ENCODE measurements at regions of chr2 and their contacts with region 1.

Region 1: GRCh38 chr2:31170071-31170698 is 31.9 kb upstream of the GALNT14 start:
- DNase-seq: peak; percentile 42
- ATAC-seq: peak; percentile 97
- H3K4me3 Mint-ChIP-seq: no peak overlapping the region
- H3K27ac Mint-ChIP-seq: no peak overlapping the region
- H3K4me1 Mint-ChIP-seq: peaks cover 25% of the 10 kb centered on the region
- H3K27me3 Mint-ChIP-seq: no peaks in the 10 kb centered on the region
- CTCF ChIP-seq: peak; percentile 30

Region 2: GRCh38 chr2:29502460-29502911 is 1667.7 kb before region 1 on chr2:
- CTCF ChIA-PET with region 1: no interaction called
- POLR2A ChIA-PET with region 1: no interaction called
- intact Hi-C with region 1: no loop called
- DNase-seq: no peak
- ATAC-seq: no peak
- H3K4me3 Mint-ChIP-seq: no peak overlapping the region
- H3K27ac Mint-ChIP-seq: no peak overlapping the region
- H3K4me1 Mint-ChIP-seq: no peaks in the 10 kb centered on the region
- H3K27me3 Mint-ChIP-seq: peaks cover 5% of the 10 kb centered on the region
- CTCF ChIP-seq: no peak

Region 3: DNA sequence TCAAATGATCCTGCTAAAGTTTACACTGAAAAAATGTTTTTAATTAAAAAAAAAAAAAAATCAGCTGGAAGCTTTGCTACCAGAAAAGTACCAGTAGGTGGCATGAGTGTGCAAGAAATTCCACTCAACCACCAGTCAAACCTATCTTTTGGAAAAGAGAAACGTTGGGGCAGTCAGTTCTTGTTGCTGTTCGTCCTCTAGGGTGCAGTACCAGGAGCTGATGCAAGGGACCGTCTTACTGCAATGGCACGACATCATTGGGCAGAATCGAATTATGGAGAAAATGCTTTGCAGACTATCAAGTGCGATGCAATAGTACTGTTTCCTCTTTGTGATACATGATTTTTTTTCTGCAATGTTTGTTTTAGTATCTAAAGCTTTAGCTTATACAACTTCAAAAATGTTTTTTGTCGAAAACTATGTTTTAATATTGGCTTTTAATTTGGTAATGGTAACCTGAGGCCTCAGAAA is 1005.1 kb before region 1 on chr2:
- CTCF ChIA-PET with region 1: interaction called, 3 read pairs
- POLR2A ChIA-PET with region 1: no interaction called
- intact Hi-C with region 1: loop called (anchors 1 kb)
- DNase-seq: no peak
- ATAC-seq: peak; percentile 100
- H3K4me3 Mint-ChIP-seq: no peak overlapping the region
- H3K27ac Mint-ChIP-seq: no peak overlapping the region
- H3K4me1 Mint-ChIP-seq: peaks cover 21% of the 10 kb centered on the region
- H3K27me3 Mint-ChIP-seq: no peaks in the 10 kb centered on the region
- CTCF ChIP-seq: peak; percentile 45

Region 4: GRCh38 chr2:31089645-31090044 is 80.5 kb before region 1 on chr2:
- CTCF ChIA-PET with region 1: interaction called, 3 read pairs
- POLR2A ChIA-PET with region 1: no interaction called
- intact Hi-C with region 1: loop called (anchors 1 kb)
- DNase-seq: no peak
- ATAC-seq: no peak
- H3K4me3 Mint-ChIP-seq: no peak overlapping the region
- H3K27ac Mint-ChIP-seq: no peak overlapping the region
- H3K4me1 Mint-ChIP-seq: no peaks in the 10 kb centered on the region
- H3K27me3 Mint-ChIP-seq: no peaks in the 10 kb centered on the region
- CTCF ChIP-seq: no peak

Region 5: GRCh38 chr2:31151501-31151900 is 18.7 kb before region 1 on chr2:
- CTCF ChIA-PET with region 1: interaction called, 10 read pairs
- POLR2A ChIA-PET with region 1: no interaction called
- intact Hi-C with region 1: no loop called
- DNase-seq: no peak
- ATAC-seq: no peak
- H3K4me3 Mint-ChIP-seq: no peak overlapping the region
- H3K27ac Mint-ChIP-seq: no peak overlapping the region
- H3K4me1 Mint-ChIP-seq: peaks cover 8% of the 10 kb centered on the region
- H3K27me3 Mint-ChIP-seq: no peaks in the 10 kb centered on the region
- CTCF ChIP-seq: no peak

Region 6: GRCh38 chr2:31219131-31219969 is 49.2 kb after region 1 on chr2:
- CTCF ChIA-PET with region 1: interaction called, 15 read pairs
- POLR2A ChIA-PET with region 1: interaction called, 3 read pairs
- intact Hi-C with region 1: loop called (anchors 1 kb)
- DNase-seq: peak; percentile 41
- ATAC-seq: peak; percentile 81
- H3K4me3 Mint-ChIP-seq: peak overlapping the region; percentile 79
- H3K27ac Mint-ChIP-seq: peak overlapping the region; percentile 99
- H3K4me1 Mint-ChIP-seq: peaks cover 97% of the 10 kb centered on the region
- H3K27me3 Mint-ChIP-seq: no peaks in the 10 kb centered on the region
- CTCF ChIP-seq: no peak

Region 7: DNA sequence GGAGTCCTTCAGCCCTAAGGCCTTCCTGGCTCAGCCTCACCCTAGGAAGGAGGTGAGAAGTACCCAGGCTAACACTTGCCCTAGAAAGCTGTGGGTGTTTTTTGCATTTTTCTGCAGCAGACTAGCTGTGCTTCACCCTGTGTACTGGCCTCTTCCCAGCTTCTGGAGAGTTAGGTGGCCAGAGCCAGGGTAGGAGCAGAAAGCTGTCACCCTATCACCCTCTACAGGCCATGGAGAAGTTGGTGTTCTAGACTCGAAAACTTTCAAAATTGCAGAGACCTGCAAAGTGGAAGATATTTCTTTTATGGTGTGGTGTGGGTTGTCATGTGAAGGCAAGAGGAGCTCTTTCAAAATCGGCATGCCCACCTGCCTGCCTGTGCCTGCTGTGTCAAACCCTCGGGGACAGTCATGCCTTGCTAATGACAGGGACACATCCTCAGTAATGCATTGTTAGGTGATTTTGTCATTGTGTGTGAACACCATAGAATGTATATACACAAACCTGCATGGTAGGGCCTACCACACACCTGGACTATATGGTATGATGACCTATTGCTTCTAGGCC is 93.5 kb after region 1 on chr2:
- CTCF ChIA-PET with region 1: interaction called, 49 read pairs
- POLR2A ChIA-PET with region 1: no interaction called
- intact Hi-C with region 1: no loop called
- DNase-seq: no peak
- ATAC-seq: no peak
- H3K4me3 Mint-ChIP-seq: no peak overlapping the region
- H3K27ac Mint-ChIP-seq: peak overlapping the region; percentile 9
- H3K4me1 Mint-ChIP-seq: peaks cover 16% of the 10 kb centered on the region
- H3K27me3 Mint-ChIP-seq: no peaks in the 10 kb centered on the region
- CTCF ChIP-seq: no peak

Region 8: GRCh38 chr2:31333527-31334183 is 163.5 kb after region 1 on chr2:
- CTCF ChIA-PET with region 1: interaction called, 71 read pairs
- POLR2A ChIA-PET with region 1: interaction called, 4 read pairs
- intact Hi-C with region 1: loop called (anchors 1 kb)
- DNase-seq: peak; percentile 70
- ATAC-seq: peak; percentile 94
- H3K4me3 Mint-ChIP-seq: no peak overlapping the region
- H3K27ac Mint-ChIP-seq: peak overlapping the region; percentile 50
- H3K4me1 Mint-ChIP-seq: peaks cover 10% of the 10 kb centered on the region
- H3K27me3 Mint-ChIP-seq: peaks cover 3% of the 10 kb centered on the region
- CTCF ChIP-seq: peak; percentile 87

Region 9: DNA sequence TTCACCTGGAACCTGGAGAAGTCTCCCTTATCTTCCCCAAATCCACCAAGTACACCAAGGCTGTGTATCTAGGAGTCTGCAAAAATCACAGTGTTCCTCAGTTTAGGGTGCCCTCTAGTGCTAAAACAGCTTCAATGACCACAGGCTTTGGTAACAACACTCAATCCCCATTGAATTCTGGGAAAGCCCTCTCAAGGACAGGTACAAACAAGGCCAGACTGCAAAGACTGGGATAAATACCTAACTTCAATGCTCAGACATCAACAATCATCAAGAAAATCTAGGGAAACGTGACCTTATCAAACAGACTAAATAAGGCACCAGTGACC is 559.5 kb after region 1 on chr2:
- CTCF ChIA-PET with region 1: no interaction called
- POLR2A ChIA-PET with region 1: no interaction called
- intact Hi-C with region 1: no loop called
- DNase-seq: no peak
- ATAC-seq: no peak
- H3K4me3 Mint-ChIP-seq: no peak overlapping the region
- H3K27ac Mint-ChIP-seq: no peak overlapping the region
- H3K4me1 Mint-ChIP-seq: no peaks in the 10 kb centered on the region
- H3K27me3 Mint-ChIP-seq: no peaks in the 10 kb centered on the region
- CTCF ChIP-seq: no peak

Measured in activated B cell treated with CpG ODN at 0.5 μM for 24 hours (primary cell).